SK-N-SH (cell line): ENCODE measurements at regions of chr15 and their contacts with region 1.

Region 1: DNA sequence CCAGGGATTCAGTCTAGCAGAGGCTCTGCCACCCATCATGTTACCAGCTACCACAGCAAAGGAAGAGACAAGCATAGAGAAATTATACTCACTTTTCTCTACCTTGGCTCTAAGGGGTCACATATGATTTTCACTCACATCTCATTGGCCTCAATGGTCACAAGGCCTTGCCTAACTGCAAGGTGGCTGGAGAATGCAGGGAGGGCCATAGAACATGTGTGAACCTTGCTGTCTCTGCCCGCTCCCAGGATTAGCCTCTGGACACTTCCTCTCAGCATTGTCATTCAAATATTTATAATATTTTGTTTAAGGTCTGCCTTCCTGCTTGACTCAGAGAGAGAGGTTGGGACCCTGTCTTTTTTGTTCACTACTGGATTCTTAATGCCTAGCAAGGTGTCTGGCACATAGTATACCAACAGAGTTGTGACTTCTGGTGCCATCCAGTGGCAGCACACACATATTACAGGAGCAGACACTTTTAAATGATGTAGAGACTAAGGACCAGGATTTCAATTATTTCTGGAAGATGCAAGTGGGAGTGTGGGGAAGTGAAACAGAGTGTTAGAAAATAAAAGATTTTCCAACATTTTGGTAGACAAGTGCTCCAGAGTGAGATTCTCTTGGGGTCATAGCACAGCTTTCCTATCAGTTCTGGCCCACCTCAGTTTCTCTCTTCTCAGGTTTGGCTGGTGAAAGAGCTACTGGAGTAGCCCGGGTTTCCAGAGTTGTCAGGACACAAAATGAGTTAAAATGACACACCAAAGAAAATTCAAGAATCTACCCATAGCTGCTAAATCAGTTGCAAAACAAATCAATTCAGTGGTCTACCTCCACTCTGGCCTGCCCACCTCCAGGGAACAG is 119.0 kb upstream of the RASGRP1 start:
- DNase-seq: peak; percentile 43
- H3K4me3 ChIP-seq: no peak overlapping the region; a peak in 1 of 4 replicates
- H3K27ac ChIP-seq: no peak overlapping the region
- H3K4me1 ChIP-seq: peaks cover 0 to 12% of the 10 kb centered on the region in 2 experiments; a peak in 2 of 4 replicates
- H3K27me3 ChIP-seq: no peaks in the 10 kb centered on the region
- CTCF ChIP-seq: peak; percentile 85
- EP300 ChIP-seq: no peak
- RAD21 ChIP-seq: peak; percentile 92

Region 2: DNA sequence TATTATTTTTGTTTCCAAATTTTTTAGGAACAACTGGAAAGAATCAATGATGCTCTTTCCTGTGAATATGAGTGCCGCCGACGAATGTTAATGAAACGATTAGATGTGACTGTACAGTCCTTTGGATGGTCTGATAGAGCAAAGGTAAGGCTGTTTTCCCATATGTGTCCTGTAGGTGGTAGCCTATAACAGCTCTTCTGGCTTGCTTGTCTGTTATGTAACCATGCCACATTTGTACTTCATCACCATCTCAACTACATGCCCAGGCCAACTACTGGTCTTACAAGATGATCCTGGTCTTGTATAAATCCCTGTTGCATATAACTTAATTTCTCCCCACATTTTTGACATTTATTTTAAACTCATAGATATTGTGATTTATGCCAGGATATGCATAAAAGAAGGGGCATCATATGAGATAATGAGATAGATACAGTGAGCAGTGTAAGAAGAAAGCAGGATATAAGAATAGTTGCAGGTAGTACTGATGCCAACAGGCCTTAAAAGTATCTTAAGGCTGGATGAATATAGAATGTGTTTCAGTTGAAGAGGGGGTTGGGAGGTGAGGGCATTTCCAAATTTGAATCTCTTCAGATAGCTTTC is 209.4 kb before region 1 on chr15:
- CTCF ChIA-PET with region 1: interaction called, 56 read pairs
- POLR2A ChIA-PET with region 1: no interaction called
- DNase-seq: peak; percentile 62
- H3K4me3 ChIP-seq: no peak overlapping the region
- H3K27ac ChIP-seq: no peak overlapping the region
- H3K4me1 ChIP-seq: no peaks in the 10 kb centered on the region; a peak in 2 of 4 replicates
- H3K27me3 ChIP-seq: no peaks in the 10 kb centered on the region
- CTCF ChIP-seq: peak; percentile 81
- EP300 ChIP-seq: no peak
- RAD21 ChIP-seq: peak; percentile 97

Region 3: GRCh38 chr15:38521316-38521715 is 162.3 kb before region 1 on chr15:
- CTCF ChIA-PET with region 1: interaction called, 12 read pairs
- POLR2A ChIA-PET with region 1: no interaction called
- DNase-seq: peak; percentile 9
- H3K4me3 ChIP-seq: no peak overlapping the region
- H3K27ac ChIP-seq: no peak overlapping the region
- H3K4me1 ChIP-seq: no peaks in the 10 kb centered on the region
- H3K27me3 ChIP-seq: no peaks in the 10 kb centered on the region
- CTCF ChIP-seq: no peak
- EP300 ChIP-seq: no peak
- RAD21 ChIP-seq: peak; percentile 46; the same call in 1 of the 2 replicates

Region 4: GRCh38 chr15:39125904-39126303 is 442.3 kb after region 1 on chr15:
- CTCF ChIA-PET with region 1: no interaction called
- POLR2A ChIA-PET with region 1: no interaction called
- DNase-seq: peak; percentile 51
- H3K4me3 ChIP-seq: no peak overlapping the region; a peak in 1 of 4 replicates
- H3K27ac ChIP-seq: peak overlapping the region in 1 of 2 experiments; percentile 79; a peak in 2 of 4 replicates
- H3K4me1 ChIP-seq: peaks cover 3 to 37% of the 10 kb centered on the region in 2 experiments
- H3K27me3 ChIP-seq: no peaks in the 10 kb centered on the region
- CTCF ChIP-seq: peak; percentile 76
- EP300 ChIP-seq: no peak
- RAD21 ChIP-seq: peak; percentile 72

Region 5: DNA sequence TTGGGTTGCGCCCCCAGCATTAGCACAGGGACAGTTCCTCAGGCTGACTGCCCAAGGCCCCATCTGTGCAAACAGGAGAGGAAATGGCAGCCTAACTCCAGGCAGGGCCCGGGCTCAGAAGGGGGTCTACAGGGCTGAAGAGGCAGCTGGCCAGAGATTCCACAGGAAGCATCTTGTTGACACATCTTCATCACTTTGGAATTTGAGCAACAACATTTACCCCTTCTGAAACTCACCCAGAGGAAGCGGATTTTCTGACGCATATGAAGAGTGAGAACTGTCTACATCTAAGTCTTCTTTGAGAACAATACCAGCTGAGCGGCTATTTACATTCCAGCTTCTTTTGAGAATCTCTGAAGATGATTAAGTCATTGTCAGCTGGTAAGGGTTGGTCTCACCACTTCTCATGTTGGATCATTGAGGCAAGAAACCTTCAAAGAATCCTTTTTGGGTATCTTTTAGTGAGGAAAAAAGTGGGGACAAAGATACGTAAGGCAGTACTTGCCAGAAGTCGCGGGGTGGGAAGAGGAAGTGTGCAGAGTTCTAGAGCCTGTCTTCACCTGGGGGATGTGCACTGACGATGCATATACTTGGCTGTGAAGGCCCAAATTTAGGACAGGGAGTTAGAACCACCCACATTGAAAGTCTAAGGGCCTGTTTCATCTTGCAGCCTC is 1380.7 kb after region 1 on chr15:
- CTCF ChIA-PET with region 1: no interaction called
- POLR2A ChIA-PET with region 1: no interaction called
- DNase-seq: no peak
- H3K4me3 ChIP-seq: no peak overlapping the region
- H3K27ac ChIP-seq: peak overlapping the region in 1 of 2 experiments; percentile 89; a peak in 2 of 4 replicates
- H3K4me1 ChIP-seq: peaks cover 13 to 28% of the 10 kb centered on the region in 2 experiments
- H3K27me3 ChIP-seq: no peaks in the 10 kb centered on the region
- CTCF ChIP-seq: no peak
- EP300 ChIP-seq: no peak
- RAD21 ChIP-seq: no peak